PC-9 (cell line): ENCODE measurements at regions of chr2 and their contacts with region 1.

Region 1: GRCh38 chr2:102841107-102841840 is 79.4 kb downstream of the TMEM182 start:
- DNase-seq: peak in 1 of 2 experiments; percentile 17
- H3K4me3 ChIP-seq: no peak overlapping the region
- H3K27ac ChIP-seq: no peak overlapping the region
- H3K4me1 ChIP-seq: no peaks in the 10 kb centered on the region
- H3K27me3 ChIP-seq: no peaks in the 10 kb centered on the region
- CTCF ChIP-seq: peak; percentile 71

Region 2: DNA sequence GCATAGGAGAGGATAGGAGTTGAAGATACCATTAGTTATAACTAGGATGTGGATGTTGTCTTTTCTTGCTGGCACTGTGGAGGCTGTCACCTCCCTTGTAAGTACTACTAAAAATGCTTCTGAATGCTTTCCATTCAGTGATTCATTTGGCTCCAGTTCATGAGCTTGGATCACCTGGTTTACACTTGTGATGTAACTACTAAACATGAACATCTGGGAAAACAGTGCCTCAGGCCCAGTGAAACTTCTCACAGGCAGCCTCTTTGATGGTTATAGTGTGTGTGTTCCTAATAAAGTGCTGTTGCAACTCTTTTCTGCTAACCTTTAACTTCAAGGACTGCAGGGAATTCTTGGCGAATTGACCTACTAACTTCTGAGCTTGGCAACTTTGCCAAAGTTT is 234.9 kb before region 1 on chr2:
- CTCF ChIA-PET with region 1: no interaction called
- POLR2A ChIA-PET with region 1: no interaction called
- intact Hi-C with region 1: no loop called
- DNase-seq: peak in 1 of 2 experiments; percentile 78
- H3K4me3 ChIP-seq: no peak overlapping the region
- H3K27ac ChIP-seq: peak overlapping the region; percentile 30
- H3K4me1 ChIP-seq: peaks cover 30% of the 10 kb centered on the region
- H3K27me3 ChIP-seq: no peaks in the 10 kb centered on the region
- CTCF ChIP-seq: no peak

Region 3: GRCh38 chr2:102815285-102815684 is 26.0 kb before region 1 on chr2:
- CTCF ChIA-PET with region 1: no interaction called
- POLR2A ChIA-PET with region 1: no interaction called
- intact Hi-C with region 1: no loop called
- DNase-seq: no peak
- H3K4me3 ChIP-seq: no peak overlapping the region
- H3K27ac ChIP-seq: no peak overlapping the region
- H3K4me1 ChIP-seq: no peaks in the 10 kb centered on the region
- H3K27me3 ChIP-seq: no peaks in the 10 kb centered on the region
- CTCF ChIP-seq: no peak

Region 4: GRCh38 chr2:102932471-102932870 is 91.2 kb after region 1 on chr2:
- CTCF ChIA-PET with region 1: no interaction called
- POLR2A ChIA-PET with region 1: no interaction called
- intact Hi-C with region 1: no loop called
- DNase-seq: peak; percentile 45 to 91
- H3K4me3 ChIP-seq: no peak overlapping the region
- H3K27ac ChIP-seq: 0 out of 2 replicates have a peak overlapping the region, but pooled peaks have one; percentile 3
- H3K4me1 ChIP-seq: peaks cover 12% of the 10 kb centered on the region
- H3K27me3 ChIP-seq: no peaks in the 10 kb centered on the region
- CTCF ChIP-seq: no peak

Region 5: GRCh38 chr2:102943251-102943650 is 102.0 kb after region 1 on chr2:
- CTCF ChIA-PET with region 1: no interaction called
- POLR2A ChIA-PET with region 1: no interaction called
- intact Hi-C with region 1: no loop called
- DNase-seq: no peak
- H3K4me3 ChIP-seq: no peak overlapping the region
- H3K27ac ChIP-seq: no peak overlapping the region
- H3K4me1 ChIP-seq: no peaks in the 10 kb centered on the region
- H3K27me3 ChIP-seq: no peaks in the 10 kb centered on the region
- CTCF ChIP-seq: no peak

Region 6: GRCh38 chr2:103008586-103008985 is 167.3 kb after region 1 on chr2:
- CTCF ChIA-PET with region 1: no interaction called
- POLR2A ChIA-PET with region 1: no interaction called
- intact Hi-C with region 1: loop called (anchors 10 kb)
- DNase-seq: peak in 1 of 2 experiments; percentile 1
- H3K4me3 ChIP-seq: no peak overlapping the region
- H3K27ac ChIP-seq: no peak overlapping the region
- H3K4me1 ChIP-seq: no peaks in the 10 kb centered on the region
- H3K27me3 ChIP-seq: peaks cover 7% of the 10 kb centered on the region; the same call in 1 of the 2 replicates
- CTCF ChIP-seq: no peak

Region 7: GRCh38 chr2:103161456-103162289 is 320.4 kb after region 1 on chr2:
- CTCF ChIA-PET with region 1: no interaction called
- POLR2A ChIA-PET with region 1: no interaction called
- intact Hi-C with region 1: loop called (anchors 10 kb)
- DNase-seq: peak in 1 of 2 experiments; percentile 7
- H3K4me3 ChIP-seq: no peak overlapping the region
- H3K27ac ChIP-seq: no peak overlapping the region
- H3K4me1 ChIP-seq: no peaks in the 10 kb centered on the region
- H3K27me3 ChIP-seq: peaks cover 64% of the 10 kb centered on the region
- CTCF ChIP-seq: peak; percentile 86

Region 8: DNA sequence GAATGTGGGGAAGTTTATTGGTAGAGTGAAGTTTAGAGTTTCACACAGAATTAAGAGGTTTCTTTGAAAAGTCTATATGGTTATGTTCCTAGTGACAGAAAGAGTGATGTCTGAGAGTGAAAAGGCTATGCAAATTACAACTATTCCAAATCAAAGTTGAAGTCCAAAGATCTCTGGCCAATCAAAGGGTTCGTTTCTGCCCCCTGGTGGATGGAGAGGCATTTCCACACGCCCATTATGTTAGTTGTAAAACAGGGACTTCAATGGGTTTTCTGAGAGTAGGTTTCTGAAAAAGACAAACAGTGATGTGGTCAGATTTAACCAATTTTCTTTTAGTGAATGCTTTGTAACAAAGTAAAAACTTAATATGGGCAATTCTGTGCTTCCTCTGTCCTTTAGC is 1571.1 kb after region 1 on chr2:
- CTCF ChIA-PET with region 1: interaction called, 4 read pairs
- POLR2A ChIA-PET with region 1: no interaction called
- intact Hi-C with region 1: loop called (anchors 5 kb)
- DNase-seq: peak in 1 of 2 experiments; percentile 3
- H3K4me3 ChIP-seq: no peak overlapping the region
- H3K27ac ChIP-seq: no peak overlapping the region
- H3K4me1 ChIP-seq: no peaks in the 10 kb centered on the region
- H3K27me3 ChIP-seq: peaks cover 35% of the 10 kb centered on the region
- CTCF ChIP-seq: peak; percentile 63